HCT116 (cell line): ENCODE measurements at regions of chr2 and their contacts with region 1.

Region 1: DNA sequence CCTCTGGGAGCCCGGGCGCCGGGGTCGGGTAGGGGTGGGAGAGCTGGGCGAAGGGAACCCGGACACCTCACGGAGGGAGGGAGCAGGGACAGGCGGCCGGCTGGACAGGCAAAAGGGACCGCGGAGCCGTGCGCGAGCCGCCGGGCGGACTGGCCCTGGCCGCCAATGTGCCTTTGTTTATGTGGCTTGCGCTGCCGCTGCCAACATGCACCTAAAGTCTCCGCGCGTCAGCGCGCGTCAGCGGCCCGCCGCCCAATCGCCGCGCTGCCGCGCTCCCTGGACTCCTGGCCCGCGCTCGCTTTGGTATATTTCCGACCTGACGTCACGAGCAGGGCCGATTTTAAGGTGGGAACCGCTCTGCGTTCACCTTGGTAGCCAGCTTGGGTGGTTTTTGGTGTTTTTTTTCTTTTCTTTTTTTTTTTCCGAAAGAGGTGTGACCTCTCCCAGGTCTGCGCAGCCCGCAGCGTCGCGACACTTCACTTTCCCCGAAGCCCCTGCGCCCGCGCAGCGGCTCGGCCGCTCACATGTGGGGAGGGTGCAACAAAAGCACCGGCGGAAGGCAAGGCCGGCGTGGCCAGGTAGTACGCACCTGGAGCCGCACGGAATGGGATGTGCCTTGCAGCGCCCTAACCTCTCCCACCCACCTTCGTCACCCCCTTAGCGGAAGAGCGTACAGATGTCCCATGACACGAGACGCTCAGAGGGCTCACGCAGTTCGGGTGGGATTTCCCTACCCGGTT is at the start of gene NR4A2:
- DNase-seq: peak; percentile 96
- ATAC-seq: peak; percentile 71
- H3K4me3 ChIP-seq: peak within 1 kb of the TSS; percentile 92 to 97
- H3K27ac ChIP-seq: peak within 1 kb of the TSS; percentile 97
- H3K4me1 ChIP-seq: peaks cover 25 to 44% of the 10 kb centered on the region in 2 experiments
- H3K27me3 ChIP-seq: no peaks in the 10 kb centered on the region
- CTCF ChIP-seq: no peak
- POLR2A ChIP-seq: peak; percentile 53
- RAD21 ChIP-seq: no peak
- total RNA-seq, gene NR4A2: 17.9 TPM

Region 2: GRCh38 chr2:156182141-156182540 is 150.6 kb before region 1 on chr2:
- CTCF ChIA-PET with region 1: no interaction called
- POLR2A ChIA-PET with region 1: no interaction called
- RAD21 ChIA-PET with region 1: no interaction called
- intact Hi-C with region 1: loop called (anchors 5 kb)
- DNase-seq: peak; percentile 92
- ATAC-seq: peak; percentile 92
- H3K4me3 ChIP-seq: peak overlapping the region in 1 of 2 experiments; percentile 9; a peak in 2 of 4 replicates
- H3K27ac ChIP-seq: peak overlapping the region; percentile 39; the same call in 1 of the 2 replicates
- H3K4me1 ChIP-seq: peaks cover 15 to 22% of the 10 kb centered on the region in 2 experiments
- H3K27me3 ChIP-seq: no peaks in the 10 kb centered on the region
- CTCF ChIP-seq: no peak
- POLR2A ChIP-seq: no peak
- RAD21 ChIP-seq: peak; percentile 50

Region 3: DNA sequence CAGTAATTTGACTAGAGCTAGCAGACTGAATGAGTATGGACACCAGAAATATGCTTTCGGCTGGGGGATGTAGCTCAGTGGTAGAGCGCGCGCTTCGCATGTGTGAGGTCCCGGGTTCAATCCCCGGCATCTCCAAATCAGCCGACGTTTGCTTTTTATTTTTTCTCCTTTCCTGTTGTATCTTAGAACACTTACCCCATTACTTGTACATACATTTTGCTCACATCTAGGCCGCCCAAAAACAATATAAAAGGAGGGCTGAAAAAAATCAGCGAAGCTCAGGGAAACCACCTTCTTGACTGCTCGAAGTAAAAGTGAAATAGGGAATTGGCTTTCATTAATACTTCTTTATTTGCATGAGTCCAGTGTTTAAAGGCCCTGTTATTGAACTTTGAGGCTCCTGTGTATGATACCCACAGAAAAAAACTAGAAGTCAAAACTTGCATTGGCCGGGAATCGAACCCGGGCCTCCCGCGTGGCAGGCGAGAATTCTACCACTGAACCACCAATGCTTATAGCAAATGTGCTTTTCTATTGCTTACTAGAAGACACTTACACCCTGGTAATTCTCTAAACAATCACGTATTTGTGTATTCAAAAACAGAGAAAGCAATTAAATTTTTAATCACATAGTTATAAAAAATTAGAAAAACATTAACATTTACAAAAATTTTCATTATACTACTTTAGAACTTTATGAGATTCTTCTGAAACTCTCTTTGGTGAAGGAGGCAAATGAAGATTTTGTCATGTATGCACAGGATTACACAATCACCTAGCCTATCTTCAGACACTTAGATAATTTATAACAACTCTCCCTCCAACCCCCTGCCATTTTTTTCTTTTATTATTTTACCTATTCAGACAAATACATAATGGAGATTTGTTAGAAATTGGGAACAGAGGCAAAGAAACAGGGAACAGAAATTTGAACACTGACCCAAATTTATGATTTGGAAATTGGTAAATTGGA is 68.3 kb after region 1 on chr2:
- CTCF ChIA-PET with region 1: interaction called, 5 read pairs
- POLR2A ChIA-PET with region 1: interaction called, 9 read pairs
- RAD21 ChIA-PET with region 1: no interaction called
- intact Hi-C with region 1: loop called (anchors 1 kb)
- DNase-seq: peak; percentile 75
- ATAC-seq: peak; percentile 76
- H3K4me3 ChIP-seq: peak overlapping the region; percentile 37 to 60
- H3K27ac ChIP-seq: peak overlapping the region; percentile 82; the same call in 1 of the 2 replicates
- H3K4me1 ChIP-seq: peaks cover 12 to 49% of the 10 kb centered on the region in 2 experiments
- H3K27me3 ChIP-seq: no peaks in the 10 kb centered on the region
- CTCF ChIP-seq: no peak
- POLR2A ChIP-seq: no peak
- RAD21 ChIP-seq: peak; percentile 7; the same call in 1 of the 2 replicates

Region 4: GRCh38 chr2:156435715-156436496 is 103.2 kb after region 1 on chr2 and contains the start of gene GPD2:
- CTCF ChIA-PET with region 1: no interaction called
- POLR2A ChIA-PET with region 1: interaction called, 7 read pairs
- RAD21 ChIA-PET with region 1: no interaction called
- intact Hi-C with region 1: loop called (anchors 2 kb)
- DNase-seq: peak; percentile 70
- ATAC-seq: peak; percentile 87
- H3K4me3 ChIP-seq: peak within 1 kb of the TSS; percentile 54 to 77
- H3K27ac ChIP-seq: peak within 1 kb of the TSS; percentile 97
- H3K4me1 ChIP-seq: peaks cover 41 to 70% of the 10 kb centered on the region in 2 experiments
- H3K27me3 ChIP-seq: no peaks in the 10 kb centered on the region
- CTCF ChIP-seq: no peak
- POLR2A ChIP-seq: peak; percentile 64
- RAD21 ChIP-seq: no peak; the same call in 1 of the 2 replicates
- total RNA-seq, gene GPD2: 80.7 TPM

Region 5: DNA sequence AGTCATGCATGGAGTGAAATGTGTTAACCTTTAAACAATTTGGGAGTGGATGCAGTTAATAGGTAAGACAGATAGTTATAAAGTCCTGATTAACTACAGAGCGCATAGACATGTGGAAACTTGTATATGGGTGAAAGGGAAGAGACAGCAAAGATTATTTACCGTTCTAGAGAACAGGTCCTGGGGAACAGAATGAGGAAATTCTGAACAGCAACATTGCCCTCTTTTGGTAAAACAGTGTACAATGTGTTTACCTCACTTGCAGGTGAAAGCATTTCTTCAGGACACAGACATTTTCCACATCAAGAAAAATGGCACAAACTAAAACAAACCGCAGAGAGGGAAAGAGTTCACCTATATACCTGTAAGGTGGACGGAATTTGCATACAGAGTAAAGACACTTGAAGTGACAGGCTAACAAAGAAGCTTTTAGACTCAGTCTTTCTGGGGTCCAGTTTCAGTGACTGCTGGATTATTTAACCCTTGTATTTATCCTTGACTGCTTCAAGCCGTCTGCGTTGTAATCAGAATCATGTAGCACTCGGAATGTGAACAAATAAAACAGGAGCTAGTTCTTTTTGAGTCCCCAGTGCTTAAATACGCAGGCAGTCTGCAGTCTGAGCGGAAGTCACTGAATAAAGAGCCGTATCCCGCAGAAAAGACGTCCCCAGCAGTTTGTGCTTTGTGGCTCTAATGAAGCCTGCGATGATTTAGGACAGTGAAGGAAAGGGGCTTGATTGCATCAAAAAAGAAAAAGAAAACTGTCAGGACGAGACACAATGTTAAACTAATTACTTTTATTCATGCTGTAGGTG is 560.0 kb after region 1 on chr2:
- CTCF ChIA-PET with region 1: no interaction called
- POLR2A ChIA-PET with region 1: interaction called, 4 read pairs
- RAD21 ChIA-PET with region 1: no interaction called
- intact Hi-C with region 1: loop called (anchors 2 kb)
- DNase-seq: peak; percentile 68
- ATAC-seq: peak; percentile 89
- H3K4me3 ChIP-seq: peak overlapping the region; percentile 49 to 67
- H3K27ac ChIP-seq: peak overlapping the region; percentile 56
- H3K4me1 ChIP-seq: peaks cover 2 to 38% of the 10 kb centered on the region in 2 experiments; a peak in 2 of 4 replicates
- H3K27me3 ChIP-seq: no peaks in the 10 kb centered on the region
- CTCF ChIP-seq: peak; percentile 51 to 63 (median 52); a peak in 5 of 6 replicates
- POLR2A ChIP-seq: no peak
- RAD21 ChIP-seq: peak; percentile 89

Region 6: GRCh38 chr2:157194097-157194688 is 861.5 kb after region 1 on chr2:
- CTCF ChIA-PET with region 1: interaction called, 3 read pairs
- POLR2A ChIA-PET with region 1: no interaction called
- RAD21 ChIA-PET with region 1: interaction called in 1 of 2 experiments, 3 read pairs
- intact Hi-C with region 1: loop called (anchors 10 kb)
- DNase-seq: peak; percentile 49
- ATAC-seq: peak; percentile 80
- H3K4me3 ChIP-seq: no peak overlapping the region
- H3K27ac ChIP-seq: no peak overlapping the region
- H3K4me1 ChIP-seq: peaks cover 0 to 3% of the 10 kb centered on the region in 2 experiments; a peak in 1 of 4 replicates
- H3K27me3 ChIP-seq: no peaks in the 10 kb centered on the region
- CTCF ChIP-seq: peak; percentile 55 to 75 (median 58); a peak in 4 of 6 replicates
- POLR2A ChIP-seq: no peak
- RAD21 ChIP-seq: peak; percentile 90

Region 7: DNA sequence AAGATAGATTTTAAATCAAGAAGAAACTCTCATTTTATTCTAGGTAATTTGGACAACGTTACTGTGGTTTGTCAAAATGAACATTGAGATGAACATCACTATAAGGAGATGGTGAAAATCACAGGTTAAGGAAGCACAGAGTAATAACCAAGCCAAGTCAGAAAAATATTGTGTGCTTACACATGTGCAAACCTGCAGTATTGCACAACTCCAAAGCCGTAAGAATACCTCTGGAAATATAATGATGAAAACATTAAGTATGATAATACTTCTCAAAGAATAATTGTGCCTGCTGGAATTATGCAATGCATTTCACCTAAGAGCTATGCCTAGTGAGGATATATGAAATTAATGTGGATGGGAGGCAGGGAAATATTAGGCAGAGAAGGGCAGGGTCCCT is 903.7 kb after region 1 on chr2:
- CTCF ChIA-PET with region 1: no interaction called
- POLR2A ChIA-PET with region 1: no interaction called
- RAD21 ChIA-PET with region 1: no interaction called
- intact Hi-C with region 1: no loop called
- DNase-seq: no peak
- ATAC-seq: no peak
- H3K4me3 ChIP-seq: no peak overlapping the region
- H3K27ac ChIP-seq: no peak overlapping the region
- H3K4me1 ChIP-seq: peaks cover 0 to 6% of the 10 kb centered on the region in 2 experiments; a peak in 1 of 4 replicates
- H3K27me3 ChIP-seq: no peaks in the 10 kb centered on the region
- CTCF ChIP-seq: no peak
- POLR2A ChIP-seq: no peak
- RAD21 ChIP-seq: no peak